GM10248 (cell line): ENCODE measurements at regions of chr1 and their contacts with region 1.

Region 1: DNA sequence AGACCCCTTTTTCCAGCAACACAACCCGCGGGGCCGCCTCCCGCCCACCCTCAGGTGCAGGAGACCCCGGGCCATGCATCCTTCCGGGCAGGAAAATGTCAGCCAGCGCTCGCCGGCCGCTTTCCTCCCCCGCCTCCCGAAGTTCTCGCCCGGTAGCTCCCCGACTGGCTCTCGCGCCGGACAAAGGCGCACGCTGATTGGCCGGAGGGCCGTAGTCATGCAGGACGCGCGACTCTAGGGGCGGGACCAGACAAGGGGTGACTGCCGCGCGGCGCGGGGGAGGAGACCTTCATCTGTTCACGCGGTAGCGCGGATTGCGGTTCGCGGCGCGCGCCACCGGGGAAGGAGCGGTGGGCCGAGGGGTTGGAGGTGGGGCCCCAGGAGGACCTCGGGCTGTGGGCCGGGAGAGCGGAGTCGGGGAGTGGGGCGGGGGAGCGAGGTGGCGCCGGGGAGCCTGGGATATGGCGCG is at the start of gene FLVCR1:
- DNase-seq: peak; percentile 99
- CTCF ChIP-seq: no peak

Region 2: GRCh38 chr1:212828395-212828794 is 29.6 kb before region 1 on chr1:
- CTCF ChIA-PET with region 1: no interaction called
- POLR2A ChIA-PET with region 1: interaction called, 10 read pairs
- DNase-seq: no peak
- CTCF ChIP-seq: no peak